ENCODE measurements at regions of chr5 and their contacts with region 1.

Region 1: GRCh38 chr5:143824851-143825720 is 13.1 kb downstream of the HMHB1 start:
- DNase-seq: peak; percentile 95
- H3K4me3 Mint-ChIP-seq: no peak overlapping the region
- H3K27ac Mint-ChIP-seq: no peak overlapping the region
- H3K4me1 Mint-ChIP-seq: peaks cover 12% of the 10 kb centered on the region
- H3K27me3 Mint-ChIP-seq: no peaks in the 10 kb centered on the region

Region 2: DNA sequence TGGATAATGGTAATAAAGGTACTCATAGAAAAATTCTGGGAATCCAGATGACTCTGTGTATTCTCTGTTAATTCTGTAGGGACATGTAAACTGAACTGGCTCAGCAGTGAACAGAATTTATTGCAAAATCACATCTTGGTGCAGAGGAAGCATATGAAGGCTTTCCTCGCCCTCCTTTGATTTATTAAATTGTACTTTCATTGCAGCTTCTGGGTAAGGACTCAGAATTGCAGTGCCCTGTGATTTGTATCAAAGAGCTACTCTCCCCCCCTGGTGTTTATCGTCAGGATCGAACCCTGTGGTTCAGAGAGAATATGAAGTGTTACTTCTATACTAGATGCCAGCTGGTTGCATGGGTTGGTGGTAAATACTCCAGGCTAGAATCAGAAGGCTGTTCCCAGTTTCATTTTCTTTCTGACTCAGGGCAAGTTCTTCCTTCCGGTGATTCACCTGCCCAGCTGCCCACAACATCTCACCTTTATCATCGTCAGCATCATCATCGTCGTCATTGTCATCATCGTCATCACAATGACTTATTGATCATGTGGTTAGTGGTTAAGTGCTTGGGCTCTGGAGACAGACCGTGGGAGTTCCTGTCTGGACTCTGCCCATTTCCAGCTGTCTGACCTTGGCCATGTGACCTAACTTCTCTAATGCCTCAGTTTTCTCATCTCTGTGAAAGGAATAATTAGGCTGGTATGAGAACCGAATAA is 816.1 kb before region 1 on chr5:
- intact Hi-C with region 1: loop called (anchors 1 kb)
- DNase-seq: peak; percentile 94
- H3K4me3 Mint-ChIP-seq: peak overlapping the region; percentile 36
- H3K27ac Mint-ChIP-seq: peak overlapping the region; percentile 93
- H3K4me1 Mint-ChIP-seq: peaks cover 73% of the 10 kb centered on the region
- H3K27me3 Mint-ChIP-seq: peaks cover 3% of the 10 kb centered on the region

Region 3: DNA sequence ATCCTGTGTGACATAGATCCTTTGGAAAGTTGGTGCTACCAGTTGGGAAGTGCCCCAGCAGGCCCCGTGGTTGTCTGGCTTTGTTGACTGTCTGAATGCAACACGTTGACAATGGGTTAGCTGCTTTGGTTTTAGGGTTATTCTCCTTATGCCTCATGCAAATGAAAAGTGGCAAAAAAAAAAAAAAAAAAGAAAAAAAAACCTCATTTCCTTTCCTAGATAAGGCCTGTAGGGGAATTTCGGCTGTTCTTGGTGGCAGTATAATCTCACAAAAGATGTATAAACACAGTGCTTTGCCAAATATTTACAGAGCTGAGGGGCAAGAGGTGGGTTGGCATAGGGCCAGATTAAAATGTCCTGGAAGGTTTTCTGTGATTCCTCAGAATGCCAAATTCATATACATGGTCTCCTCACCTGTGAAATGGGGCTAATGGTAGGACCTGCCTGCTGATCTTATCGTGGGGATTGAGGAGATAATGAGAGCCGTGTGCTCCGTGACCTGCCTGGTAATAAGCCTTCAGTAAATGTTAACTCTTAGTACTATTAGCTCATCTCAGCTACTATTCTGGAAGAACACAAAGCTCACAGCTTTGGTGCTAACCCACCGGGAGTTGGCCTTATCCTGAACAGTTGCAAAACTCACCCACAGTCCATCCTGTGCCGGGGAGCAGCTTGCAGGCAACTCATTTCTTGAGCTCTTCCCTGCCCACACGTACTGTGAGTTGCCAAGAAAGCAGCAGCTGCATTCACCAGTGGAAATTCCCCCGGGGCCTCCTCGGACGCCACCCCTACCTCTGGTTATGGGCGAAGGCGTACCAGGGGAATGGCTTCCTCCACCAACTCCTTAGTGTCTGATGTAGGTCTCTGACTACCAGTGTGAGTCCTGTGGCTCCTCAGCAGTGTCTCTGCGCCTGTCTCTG is 641.9 kb before region 1 on chr5:
- intact Hi-C with region 1: loop called (anchors 5 kb)
- DNase-seq: peak; percentile 85
- H3K4me3 Mint-ChIP-seq: peak overlapping the region; percentile 73
- H3K27ac Mint-ChIP-seq: peak overlapping the region; percentile 97
- H3K4me1 Mint-ChIP-seq: peaks cover 59% of the 10 kb centered on the region
- H3K27me3 Mint-ChIP-seq: no peaks in the 10 kb centered on the region

Region 4: DNA sequence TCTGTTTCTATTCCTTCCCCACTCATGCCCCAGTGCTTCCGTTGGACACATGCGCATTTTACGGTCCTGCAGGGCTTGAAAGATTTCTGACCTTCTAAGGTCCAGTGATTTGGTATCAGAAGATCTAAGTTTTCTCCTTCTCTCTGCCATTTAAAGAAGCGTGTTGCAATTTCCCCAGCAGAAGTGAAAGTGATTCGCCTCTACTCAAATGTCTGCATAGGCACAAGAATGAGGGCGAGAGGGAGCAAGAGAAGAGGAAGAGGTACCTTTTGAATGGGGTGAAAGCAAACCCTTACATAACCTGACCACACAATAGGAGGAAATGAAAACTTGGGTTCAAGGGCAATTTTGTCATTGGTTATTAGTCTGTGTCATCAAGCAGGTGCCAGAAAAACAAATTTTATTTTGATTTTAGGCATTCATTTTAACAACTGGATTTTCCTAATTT is 389.9 kb before region 1 on chr5:
- intact Hi-C with region 1: loop called (anchors 5 kb)
- DNase-seq: peak; percentile 79
- H3K4me3 Mint-ChIP-seq: peak overlapping the region; percentile 88
- H3K27ac Mint-ChIP-seq: peak overlapping the region; percentile 92
- H3K4me1 Mint-ChIP-seq: peaks cover 51% of the 10 kb centered on the region
- H3K27me3 Mint-ChIP-seq: no peaks in the 10 kb centered on the region

Region 5: DNA sequence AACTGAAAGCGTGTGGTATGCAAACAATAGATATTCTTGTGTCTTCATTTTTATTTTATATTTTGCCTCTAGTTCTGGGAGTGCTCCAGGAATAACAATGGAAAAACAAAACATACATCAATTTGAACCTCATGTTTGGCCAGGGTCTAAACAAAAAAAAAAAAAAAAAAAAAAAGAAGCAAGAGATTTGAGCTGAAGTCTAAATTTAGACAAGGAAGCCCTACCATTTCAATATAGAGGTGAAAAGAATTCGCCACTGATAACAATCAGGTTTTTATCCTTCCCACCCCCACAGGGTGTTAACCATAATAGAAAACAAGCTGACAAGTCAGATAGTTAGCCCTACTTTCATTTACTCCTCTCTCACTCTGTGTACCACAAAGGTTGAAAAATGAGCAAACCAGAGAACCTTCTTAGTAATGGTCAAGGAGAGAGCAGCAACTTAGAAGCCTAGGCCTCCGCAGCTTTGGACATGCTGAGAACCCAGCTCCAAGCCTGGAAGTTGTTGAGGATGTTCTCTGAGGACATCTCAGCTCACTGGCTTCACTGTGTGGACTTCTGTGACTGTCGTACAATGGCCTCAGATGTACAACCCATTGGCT is 131.3 kb before region 1 on chr5:
- intact Hi-C with region 1: loop called (anchors 5 kb)
- DNase-seq: peak; percentile 59
- H3K4me3 Mint-ChIP-seq: no peak overlapping the region
- H3K27ac Mint-ChIP-seq: peak overlapping the region; percentile 27
- H3K4me1 Mint-ChIP-seq: peaks cover 16% of the 10 kb centered on the region
- H3K27me3 Mint-ChIP-seq: peaks cover 7% of the 10 kb centered on the region

Region 6: GRCh38 chr5:143775258-143775657 is 49.8 kb before region 1 on chr5:
- intact Hi-C with region 1: no loop called
- DNase-seq: no peak
- H3K4me3 Mint-ChIP-seq: no peak overlapping the region
- H3K27ac Mint-ChIP-seq: no peak overlapping the region
- H3K4me1 Mint-ChIP-seq: peaks cover 2% of the 10 kb centered on the region
- H3K27me3 Mint-ChIP-seq: no peaks in the 10 kb centered on the region

Region 7: GRCh38 chr5:144191998-144192397 is 366.9 kb after region 1 on chr5:
- intact Hi-C with region 1: loop called (anchors 2 kb)
- DNase-seq: peak; percentile 87
- H3K4me3 Mint-ChIP-seq: no peak overlapping the region
- H3K27ac Mint-ChIP-seq: no peak overlapping the region
- H3K4me1 Mint-ChIP-seq: peaks cover 39% of the 10 kb centered on the region
- H3K27me3 Mint-ChIP-seq: peaks cover 2% of the 10 kb centered on the region

Measured in activated CD4-positive, alpha-beta T cell treated with anti-CD3 and anti-CD28 coated beads, Interleukin-2, amount 10 ng/mL, durations not matched to agents 24 days and 14 days (primary cell).